ENCODE measurements at regions of chr7 and their contacts with region 1.

Region 1: GRCh38 chr7:100852048-100852872 is at the start of gene SLC12A9:
- DNase-seq: peak; percentile 92 to 95
- H3K4me3 ChIP-seq: peak within 1 kb of the TSS; percentile 65 to 96
- H3K27ac ChIP-seq: peak within 1 kb of the TSS; percentile 76 to 81
- H3K4me1 ChIP-seq: peaks cover 0 to 16% (median 11%) of the 10 kb centered on the region in 4 donors
- H3K27me3 ChIP-seq: no peaks in the 10 kb centered on the region
- CTCF ChIP-seq: peak; percentile 88 to 92

Region 2: DNA sequence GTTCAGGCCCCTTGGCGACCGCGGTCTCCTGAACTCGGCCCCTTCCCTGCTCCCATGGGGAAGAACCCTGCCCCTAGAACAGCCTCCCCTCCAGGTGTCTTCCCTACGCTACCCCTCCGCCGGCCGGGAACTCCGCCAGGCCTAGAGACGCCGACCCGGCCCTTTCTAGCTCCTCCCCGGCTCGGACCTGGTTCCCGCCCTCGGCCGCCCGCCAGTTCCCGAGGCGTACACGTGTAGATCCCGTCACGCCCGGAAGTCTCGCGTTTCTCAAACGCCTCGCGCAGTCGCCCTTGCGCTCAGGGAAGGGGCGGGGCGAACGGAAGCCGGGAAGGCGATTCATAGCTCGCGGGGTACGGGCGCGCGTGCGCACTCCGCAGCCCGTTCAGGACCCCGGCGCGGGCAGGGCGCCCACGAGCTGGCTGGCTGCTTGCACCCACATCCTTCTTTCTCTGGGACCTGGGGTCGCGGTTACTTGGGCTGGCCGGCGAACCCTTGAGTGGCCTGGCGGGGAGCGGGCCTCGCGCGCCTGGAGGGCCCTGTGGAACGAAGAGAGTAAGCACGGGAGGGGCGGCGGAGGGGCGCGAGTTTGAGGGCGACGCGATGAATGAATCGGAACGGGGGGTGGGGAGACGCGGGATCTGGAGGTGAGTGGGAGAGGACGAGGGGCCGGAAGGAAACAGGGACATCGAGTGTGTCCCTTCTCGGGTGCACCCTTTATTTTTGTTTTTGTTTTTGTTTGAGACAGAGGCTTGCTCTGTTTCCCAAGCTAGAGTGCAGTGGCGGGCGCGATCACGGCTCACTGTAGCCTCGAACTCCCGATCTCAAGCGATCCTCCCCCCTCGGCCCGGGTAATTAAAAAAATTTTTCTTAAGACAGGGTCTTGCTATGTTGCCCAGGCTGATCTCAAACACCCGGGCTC is 146.2 kb before region 1 on chr7 and contains the start of gene POP7:
- intact Hi-C with region 1: loop called (anchors 5 kb)
- DNase-seq: peak; percentile 98 to 99
- H3K4me3 ChIP-seq: peak within 1 kb of the TSS; percentile 63 to 77
- H3K27ac ChIP-seq: peak within 1 kb of the TSS; percentile 90 to 96
- H3K4me1 ChIP-seq: peaks cover 0 to 21% (median 19%) of the 10 kb centered on the region in 4 donors
- H3K27me3 ChIP-seq: no peaks in the 10 kb centered on the region
- CTCF ChIP-seq: no peak

Region 3: GRCh38 chr7:100803398-100804233 is 48.6 kb before region 1 on chr7:
- intact Hi-C with region 1: loop called (anchors 1 kb)
- DNase-seq: peak; percentile 81 to 83
- H3K4me3 ChIP-seq: no peak overlapping the region
- H3K27ac ChIP-seq: no peak overlapping the region
- H3K4me1 ChIP-seq: peaks cover 0 to 27% (median 7%) of the 10 kb centered on the region in 4 donors
- H3K27me3 ChIP-seq: peaks cover 0 to 31% of the 10 kb centered on the region in 2 donors
- CTCF ChIP-seq: no peak

Region 4: DNA sequence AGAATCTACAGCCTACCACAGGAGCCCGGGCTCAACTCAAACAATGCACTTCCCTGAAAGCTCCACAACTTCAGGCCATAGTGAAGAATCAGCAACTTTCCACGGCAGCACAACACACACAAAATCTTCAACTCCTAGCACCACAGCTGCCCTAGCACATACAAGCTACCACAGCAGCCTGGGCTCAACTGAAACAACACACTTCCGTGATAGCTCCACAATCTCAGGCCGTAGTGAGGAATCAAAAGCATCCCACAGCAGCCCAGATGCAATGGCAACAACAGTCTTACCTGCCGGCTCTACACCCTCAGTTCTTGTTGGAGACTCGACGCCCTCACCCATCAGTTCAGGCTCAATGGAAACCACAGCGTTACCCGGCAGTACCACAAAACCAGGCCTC is 139.4 kb after region 1 on chr7:
- intact Hi-C with region 1: no loop called
- DNase-seq: no peak
- H3K4me3 ChIP-seq: no peak overlapping the region
- H3K27ac ChIP-seq: no peak overlapping the region
- H3K4me1 ChIP-seq: no peaks in the 10 kb centered on the region
- H3K27me3 ChIP-seq: no peaks in the 10 kb centered on the region
- CTCF ChIP-seq: no peak

Measured in tibial artery (tissue), 4 donors.